ENCODE measurements at regions of chr7 and their contacts with region 1.

Region 1: GRCh38 chr7:130896898-130897514 is 163.0 kb upstream of the KLF14 start:
- DNase-seq: peak; percentile 67 to 91
- ATAC-seq: peak; percentile 26 to 57
- H3K4me3 ChIP-seq: no peak overlapping the region
- H3K27ac ChIP-seq: peak overlapping the region; percentile 92 to 93
- H3K4me1 ChIP-seq: peaks cover 97% of the 10 kb centered on the region
- CTCF ChIP-seq: peak; percentile 85
- EP300 ChIP-seq: no peak
- POLR2A ChIP-seq: no peak
- RAD21 ChIP-seq: peak; percentile 90

Region 2: DNA sequence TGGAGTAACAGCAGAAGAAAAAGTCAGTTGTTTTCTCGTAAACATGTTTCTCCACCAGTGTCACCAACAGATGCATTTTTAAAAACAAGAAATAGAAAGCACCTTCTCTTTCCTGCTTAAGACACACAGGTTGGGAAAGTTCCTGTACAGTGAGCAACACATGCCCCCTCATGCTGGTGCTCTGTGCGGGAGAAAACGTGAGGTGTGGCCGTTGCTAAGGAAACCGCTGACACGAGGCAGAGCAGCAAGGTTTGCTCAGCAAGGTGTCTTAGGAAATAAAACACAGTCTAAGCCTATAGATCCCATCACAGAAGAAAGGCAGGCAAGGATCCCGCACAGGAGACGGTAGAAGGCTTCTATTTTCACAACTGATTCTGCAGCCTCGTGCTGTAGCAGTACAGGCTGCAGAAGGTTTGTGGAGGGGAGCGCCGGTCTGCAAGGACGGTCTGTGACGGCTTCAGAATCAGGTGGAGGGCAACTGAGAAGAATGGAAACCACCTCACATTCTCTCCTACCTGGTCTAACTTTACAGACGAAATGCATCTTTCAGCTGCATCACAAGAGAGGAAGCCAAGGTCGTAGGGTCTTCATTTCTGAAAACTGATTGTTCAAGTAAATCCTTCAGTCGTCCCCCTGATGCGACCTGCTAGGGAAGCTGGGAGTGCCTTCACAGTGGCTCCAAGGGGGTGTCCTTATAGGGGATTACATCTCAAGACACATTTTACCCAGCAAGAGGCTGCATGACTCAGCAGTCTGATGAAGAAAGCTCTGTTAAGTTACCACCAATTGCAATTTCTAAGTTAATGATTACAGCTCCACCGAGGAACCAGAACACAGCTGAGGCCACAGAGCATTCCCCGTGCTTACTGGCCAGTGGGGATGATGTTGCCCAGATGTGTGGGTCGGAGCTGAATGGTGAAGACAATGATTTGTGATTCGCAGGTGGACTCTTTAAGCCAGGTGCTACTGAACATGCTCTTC is 12.3 kb before region 1 on chr7:
- CTCF ChIA-PET with region 1: interaction called, 185 read pairs
- POLR2A ChIA-PET with region 1: interaction called, 15 read pairs
- DNase-seq: peak in 1 of 2 experiments; percentile 82
- ATAC-seq: peak; percentile 30 to 39
- H3K4me3 ChIP-seq: peak overlapping the region; percentile 22; the same call in 1 of the 3 replicates
- H3K27ac ChIP-seq: peak overlapping the region; percentile 94
- H3K4me1 ChIP-seq: peaks cover 99% of the 10 kb centered on the region
- CTCF ChIP-seq: no peak
- EP300 ChIP-seq: peak in 1 of 2 experiments; percentile 64; a peak in 3 of 5 replicates
- POLR2A ChIP-seq: no peak
- RAD21 ChIP-seq: no peak

Region 3: DNA sequence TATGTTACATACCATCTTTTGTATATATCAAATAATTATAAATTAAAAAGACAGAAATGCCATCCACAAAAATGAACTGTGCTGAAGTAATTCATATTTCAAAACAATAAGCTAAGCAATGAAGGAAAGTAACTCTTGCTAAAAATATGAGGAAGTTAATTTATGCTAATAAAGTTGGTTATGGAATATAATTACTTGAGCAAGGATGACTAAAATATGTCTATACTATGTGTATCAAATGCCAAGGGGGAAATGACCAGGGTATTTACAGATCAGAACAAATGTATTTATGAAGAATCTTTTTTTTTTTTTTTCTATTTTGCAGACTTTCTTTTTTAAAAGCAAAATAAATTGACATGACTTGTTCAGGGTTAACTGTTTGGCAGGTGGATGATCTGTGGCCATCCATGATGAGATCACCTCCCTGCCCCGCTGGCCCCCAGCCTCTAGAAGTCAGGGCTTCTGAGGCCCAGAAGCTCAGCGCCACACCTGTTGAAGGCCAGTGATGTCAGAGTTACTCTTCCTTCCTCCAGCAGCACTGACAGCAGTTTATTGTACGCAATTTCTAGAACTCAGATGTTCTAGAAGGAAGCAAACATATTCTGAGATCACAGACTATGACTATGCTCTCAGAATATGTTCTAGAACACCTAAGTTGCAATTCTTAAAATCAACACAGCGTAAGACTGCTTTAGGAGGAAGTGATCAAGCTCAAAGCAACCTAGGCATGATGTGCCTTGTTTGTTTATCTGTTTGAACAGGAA is 33.1 kb after region 1 on chr7:
- CTCF ChIA-PET with region 1: interaction called, 114 read pairs
- POLR2A ChIA-PET with region 1: interaction called, 5 read pairs
- DNase-seq: peak in 1 of 2 experiments; percentile 77
- ATAC-seq: peak; percentile 50 to 56
- H3K4me3 ChIP-seq: no peak overlapping the region
- H3K27ac ChIP-seq: peak overlapping the region; percentile 75 to 85
- H3K4me1 ChIP-seq: peaks cover 84% of the 10 kb centered on the region
- CTCF ChIP-seq: no peak
- EP300 ChIP-seq: peak in 1 of 2 experiments; percentile 20; a peak in 1 of 5 replicates
- POLR2A ChIP-seq: no peak
- RAD21 ChIP-seq: no peak

Region 4: DNA sequence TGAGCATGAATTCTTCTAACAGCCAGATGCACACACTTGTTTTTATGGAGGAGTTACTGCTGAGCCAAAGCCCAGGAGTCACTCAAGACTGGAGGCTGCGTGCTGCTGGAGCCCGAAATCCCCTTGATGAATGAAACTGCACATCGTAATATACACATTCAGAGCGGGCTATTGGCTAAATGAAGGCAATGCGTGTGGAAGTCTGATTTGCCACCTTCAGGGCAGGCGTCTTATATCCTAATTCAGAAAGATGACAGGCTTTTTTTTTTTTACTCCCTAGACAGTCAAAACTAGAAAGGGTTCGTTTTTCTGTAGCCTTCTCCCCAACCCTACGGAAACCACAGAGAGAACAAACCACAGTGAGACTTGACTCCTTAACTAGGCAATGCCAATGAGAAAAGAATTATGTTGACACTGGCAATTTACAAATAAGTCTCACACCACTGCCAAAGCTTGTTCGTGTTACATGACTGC is 64.2 kb after region 1 on chr7:
- CTCF ChIA-PET with region 1: interaction called, 110 read pairs
- POLR2A ChIA-PET with region 1: interaction called, 10 read pairs
- DNase-seq: peak in 1 of 2 experiments; percentile 82
- ATAC-seq: peak; percentile 69 to 79
- H3K4me3 ChIP-seq: peak overlapping the region; percentile 44
- H3K27ac ChIP-seq: peak overlapping the region; percentile 94 to 96
- H3K4me1 ChIP-seq: peaks cover 76% of the 10 kb centered on the region
- CTCF ChIP-seq: no peak
- EP300 ChIP-seq: no peak
- POLR2A ChIP-seq: 0 out of 2 replicates have a peak, but pooled peaks have one; percentile 18
- RAD21 ChIP-seq: no peak

Region 5: GRCh38 chr7:130988443-130988842 is 91.4 kb after region 1 on chr7:
- CTCF ChIA-PET with region 1: interaction called, 13 read pairs
- POLR2A ChIA-PET with region 1: no interaction called
- DNase-seq: no peak
- ATAC-seq: no peak
- H3K4me3 ChIP-seq: no peak overlapping the region
- H3K27ac ChIP-seq: no peak overlapping the region; a peak in 1 of 6 replicates
- H3K4me1 ChIP-seq: peaks cover 67% of the 10 kb centered on the region
- CTCF ChIP-seq: no peak
- EP300 ChIP-seq: no peak
- POLR2A ChIP-seq: no peak
- RAD21 ChIP-seq: no peak

Region 6: GRCh38 chr7:131015655-131015954 is 118.6 kb after region 1 on chr7:
- CTCF ChIA-PET with region 1: interaction called, 29 read pairs
- POLR2A ChIA-PET with region 1: interaction called, 4 read pairs
- DNase-seq: peak in 1 of 2 experiments; percentile 71
- ATAC-seq: peak; percentile 17 to 55; a peak in 3 of 6 replicates
- H3K4me3 ChIP-seq: no peak overlapping the region
- H3K27ac ChIP-seq: peak overlapping the region; percentile 58 to 73; a peak in 5 of 6 replicates
- H3K4me1 ChIP-seq: peaks cover 68% of the 10 kb centered on the region
- CTCF ChIP-seq: no peak
- EP300 ChIP-seq: no peak
- POLR2A ChIP-seq: no peak
- RAD21 ChIP-seq: no peak

Measured in A549 (cell line).